ENCODE measurements at regions of chr2 and their contacts with region 1.

Region 1: GRCh38 chr2:53786705-53787612 is at the starts of genes ASB3 and ERLEC1:
- DNase-seq: peak; percentile 95
- total RNA-seq, gene ASB3: 9.2 TPM
- total RNA-seq, gene ERLEC1: 46.0 TPM

Region 2: GRCh38 chr2:53767405-53768241 is 19.3 kb before region 1 on chr2 and contains the start of gene CHAC2:
- intact Hi-C with region 1: loop called (anchors 2 kb)
- DNase-seq: peak; percentile 91
- total RNA-seq, gene CHAC2: 1.4 TPM

Measured in cardiac septum (tissue), 1 donor.